ENCODE measurements at regions of chr20 and their contacts with region 1.

Region 1: DNA sequence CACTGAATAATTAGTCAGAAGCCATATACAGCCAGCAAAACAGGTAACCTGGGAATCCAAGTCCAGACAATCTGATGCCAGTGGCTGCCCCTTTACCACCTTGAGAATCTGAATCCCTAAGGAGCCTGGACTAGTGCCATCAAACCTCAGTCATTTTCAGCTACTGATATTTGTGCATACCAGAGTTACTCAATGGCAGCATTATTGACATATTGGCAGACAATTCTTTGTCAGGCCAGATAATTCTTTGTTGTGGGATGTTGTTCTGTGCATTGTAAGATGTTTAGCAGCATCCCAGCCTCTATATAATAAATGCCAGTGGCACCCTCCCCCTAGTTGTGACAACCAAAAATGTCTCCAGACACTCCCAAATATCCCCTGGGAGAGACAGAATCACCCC is 3.2 kb upstream of the EIF2S2 start:
- DNase-seq: no peak
- H3K4me3 Mint-ChIP-seq: no peak overlapping the region
- H3K27ac Mint-ChIP-seq: no peak overlapping the region
- H3K4me1 Mint-ChIP-seq: peaks cover 10% of the 10 kb centered on the region
- H3K27me3 Mint-ChIP-seq: peaks cover 12% of the 10 kb centered on the region

Region 2: GRCh38 chr20:34274694-34275093 is 159.5 kb after region 1 on chr20:
- CTCF ChIA-PET with region 1: no interaction called
- POLR2A ChIA-PET with region 1: interaction called, 11 read pairs
- DNase-seq: no peak
- H3K4me3 Mint-ChIP-seq: no peak overlapping the region
- H3K27ac Mint-ChIP-seq: no peak overlapping the region
- H3K4me1 Mint-ChIP-seq: no peaks in the 10 kb centered on the region
- H3K27me3 Mint-ChIP-seq: no peaks in the 10 kb centered on the region